PC-3 (cell line): ENCODE measurements at regions of chr6 and their contacts with region 1.

Region 1: DNA sequence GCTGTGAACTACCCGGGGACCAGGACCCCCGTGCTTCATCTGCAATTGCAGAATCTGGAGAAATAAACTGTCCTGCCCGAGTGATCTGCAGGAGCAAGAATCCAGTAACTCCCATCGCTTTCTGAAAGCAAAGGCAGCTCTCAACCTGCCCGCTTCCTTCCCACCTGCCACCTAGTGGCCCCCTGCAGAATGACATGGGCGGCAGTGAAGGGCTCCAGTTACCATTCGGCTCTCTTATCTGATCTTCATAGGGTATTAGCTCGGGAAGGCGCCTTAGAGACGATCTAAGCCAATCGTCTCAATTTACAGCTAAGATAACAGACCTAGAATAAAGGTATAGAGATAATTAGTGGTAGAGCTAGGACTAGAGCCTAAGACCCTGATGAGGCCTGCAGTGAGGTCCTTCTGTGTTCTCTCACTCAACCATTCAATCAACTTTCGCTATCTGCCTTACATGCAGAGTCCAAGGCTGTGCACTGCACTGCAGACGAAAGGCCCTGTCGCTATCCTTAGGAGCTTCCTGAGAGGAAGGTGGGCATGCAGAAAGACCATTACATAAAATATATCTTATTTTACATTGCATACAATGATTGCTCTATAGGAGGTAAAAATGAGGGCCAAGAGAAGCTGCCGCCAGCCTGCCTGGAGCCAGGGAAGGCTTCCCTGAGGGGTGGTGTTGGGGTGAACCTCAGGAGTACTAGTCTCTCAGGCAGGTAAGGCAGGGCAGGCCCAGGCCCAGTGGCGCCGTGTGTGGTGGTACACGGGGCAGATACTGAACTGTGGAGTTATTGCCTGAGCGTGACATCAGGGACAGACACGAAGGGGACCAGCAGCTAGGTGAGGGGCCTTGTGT is 7.1 kb upstream of the PSMG4 start:
- DNase-seq: peak; percentile 91
- ATAC-seq: peak; percentile 88
- H3K4me3 ChIP-seq: no peak overlapping the region
- H3K27ac ChIP-seq: no peak overlapping the region
- H3K4me1 ChIP-seq: peaks cover 16% of the 10 kb centered on the region
- H3K27me3 ChIP-seq: no peaks in the 10 kb centered on the region
- CTCF ChIP-seq: peak; percentile 95

Region 2: DNA sequence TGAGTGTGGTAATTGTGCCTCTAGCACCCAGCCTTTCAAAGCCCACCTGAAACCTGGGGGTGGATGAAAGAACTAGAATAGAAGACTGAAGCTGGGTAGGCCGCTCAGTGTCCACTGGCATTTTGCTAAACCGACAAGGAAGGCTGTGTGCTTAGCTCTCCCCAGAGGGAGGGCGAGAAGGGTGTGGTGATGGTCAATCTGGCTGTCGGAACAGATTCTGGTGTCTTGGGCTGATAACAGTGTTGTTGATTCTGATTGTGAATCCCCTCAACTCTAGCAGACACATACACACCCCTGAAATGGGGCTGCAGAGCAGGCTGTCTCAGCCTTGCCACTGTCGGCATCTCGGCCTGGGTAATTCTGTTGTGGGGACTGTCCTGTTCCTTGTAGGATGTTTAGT is 137.3 kb before region 1 on chr6:
- CTCF ChIA-PET with region 1: no interaction called
- POLR2A ChIA-PET with region 1: no interaction called
- intact Hi-C with region 1: no loop called
- DNase-seq: no peak
- ATAC-seq: no peak
- H3K4me3 ChIP-seq: no peak overlapping the region
- H3K27ac ChIP-seq: no peak overlapping the region
- H3K4me1 ChIP-seq: peaks cover 14% of the 10 kb centered on the region
- H3K27me3 ChIP-seq: no peaks in the 10 kb centered on the region
- CTCF ChIP-seq: no peak

Region 3: GRCh38 chr6:3125815-3126214 is 125.9 kb before region 1 on chr6:
- CTCF ChIA-PET with region 1: interaction called, 8 read pairs
- POLR2A ChIA-PET with region 1: no interaction called
- intact Hi-C with region 1: loop called (anchors 1 kb)
- DNase-seq: no peak
- ATAC-seq: peak; percentile 29; the same call in 1 of the 2 replicates
- H3K4me3 ChIP-seq: no peak overlapping the region
- H3K27ac ChIP-seq: no peak overlapping the region
- H3K4me1 ChIP-seq: peaks cover 4% of the 10 kb centered on the region
- H3K27me3 ChIP-seq: no peaks in the 10 kb centered on the region
- CTCF ChIP-seq: no peak

Region 4: DNA sequence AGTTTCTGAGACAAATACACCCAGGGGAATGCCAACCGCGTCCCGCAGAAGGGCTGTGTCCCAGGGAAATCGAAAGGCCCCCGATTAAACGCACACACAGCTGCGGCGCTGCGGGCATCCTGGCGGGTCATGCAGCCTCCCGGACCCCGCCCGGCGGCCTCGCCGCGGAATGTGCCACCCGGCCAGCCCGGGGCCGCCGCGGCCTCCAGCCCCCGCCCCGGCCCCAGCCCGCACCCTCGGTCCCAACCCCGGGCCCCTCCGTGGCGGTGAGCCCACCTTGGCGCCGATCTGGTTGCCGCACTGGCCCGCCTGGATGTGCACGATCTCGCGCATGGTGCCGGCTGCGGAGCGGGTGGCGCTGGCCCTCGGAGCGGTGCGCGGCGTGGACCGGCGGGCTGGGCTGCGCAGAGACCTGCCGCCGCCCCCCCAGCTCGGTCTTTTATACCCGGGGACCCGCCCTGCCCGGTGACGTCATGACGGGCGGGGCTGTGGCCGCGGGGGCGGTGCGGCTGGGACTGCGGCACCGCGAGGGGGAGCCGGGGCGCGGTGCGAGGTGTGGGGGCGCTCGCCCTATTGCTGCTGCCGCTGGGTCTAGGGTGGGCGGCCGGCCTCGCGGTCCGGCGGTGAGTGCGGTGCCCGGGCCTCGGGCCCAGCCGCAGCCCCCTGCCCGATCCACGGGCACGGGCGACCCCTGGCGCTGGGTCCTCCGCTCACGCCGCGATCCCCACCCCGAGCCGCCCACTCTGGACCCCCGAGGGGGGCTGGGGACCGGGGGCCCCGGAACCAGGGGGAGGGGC is 94.4 kb before region 1 on chr6 and contains the start of gene TUBB2A:
- CTCF ChIA-PET with region 1: interaction called, 7 read pairs
- POLR2A ChIA-PET with region 1: no interaction called
- intact Hi-C with region 1: loop called (anchors 1 kb)
- DNase-seq: peak; percentile 81
- ATAC-seq: peak; percentile 63
- H3K4me3 ChIP-seq: peak within 1 kb of the TSS; percentile 92
- H3K27ac ChIP-seq: 0 out of 2 replicates have a peak within 1 kb of the TSS, but pooled peaks have one; percentile 8
- H3K4me1 ChIP-seq: peaks cover 12% of the 10 kb centered on the region
- H3K27me3 ChIP-seq: no peaks in the 10 kb centered on the region
- CTCF ChIP-seq: peak; percentile 54
- total RNA-seq, gene TUBB2A: 66.8 and 70.2 TPM in 2 replicates

Region 5: DNA sequence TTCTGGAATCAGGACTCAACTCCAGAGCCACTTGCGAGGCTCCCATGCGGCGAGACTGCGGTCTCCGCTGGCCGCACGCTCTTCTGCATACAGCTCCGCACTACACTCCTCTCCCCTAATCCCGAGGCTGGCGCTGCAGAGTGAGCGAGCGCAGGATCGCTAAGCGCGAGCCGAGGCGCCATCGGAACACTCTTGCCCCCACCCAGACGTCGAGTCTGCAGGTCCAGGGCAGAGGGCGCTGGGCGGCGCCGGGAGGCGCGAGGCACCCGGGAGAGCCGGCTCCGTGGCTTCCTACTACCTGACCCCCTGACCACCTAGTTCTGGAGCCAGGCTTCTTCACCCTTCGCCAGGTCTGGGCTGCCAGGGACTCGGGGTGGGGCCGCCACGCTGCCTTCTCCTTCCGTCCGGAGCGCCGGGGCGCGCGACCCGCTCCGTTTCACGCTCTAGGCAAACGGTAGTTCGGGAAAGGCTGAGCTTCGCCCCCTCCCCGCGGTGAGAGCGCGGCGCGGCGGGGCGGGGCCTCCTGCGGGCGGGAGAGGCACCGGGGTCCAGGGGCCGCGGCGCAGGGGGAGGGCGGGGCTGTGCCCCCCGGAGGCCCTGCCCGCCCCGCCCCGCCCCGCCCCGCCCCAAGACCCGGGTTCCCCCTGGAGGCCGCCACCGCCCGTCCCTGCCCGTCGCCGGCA is 89.0 kb before region 1 on chr6:
- CTCF ChIA-PET with region 1: interaction called, 7 read pairs
- POLR2A ChIA-PET with region 1: no interaction called
- intact Hi-C with region 1: loop called (anchors 1 kb)
- DNase-seq: peak; percentile 78
- ATAC-seq: peak; percentile 82
- H3K4me3 ChIP-seq: peak overlapping the region; percentile 74
- H3K27ac ChIP-seq: peak overlapping the region; percentile 69
- H3K4me1 ChIP-seq: peaks cover 27% of the 10 kb centered on the region
- H3K27me3 ChIP-seq: no peaks in the 10 kb centered on the region
- CTCF ChIP-seq: no peak